ENCODE measurements at regions of chr13 and their contacts with region 1.

Region 1: DNA sequence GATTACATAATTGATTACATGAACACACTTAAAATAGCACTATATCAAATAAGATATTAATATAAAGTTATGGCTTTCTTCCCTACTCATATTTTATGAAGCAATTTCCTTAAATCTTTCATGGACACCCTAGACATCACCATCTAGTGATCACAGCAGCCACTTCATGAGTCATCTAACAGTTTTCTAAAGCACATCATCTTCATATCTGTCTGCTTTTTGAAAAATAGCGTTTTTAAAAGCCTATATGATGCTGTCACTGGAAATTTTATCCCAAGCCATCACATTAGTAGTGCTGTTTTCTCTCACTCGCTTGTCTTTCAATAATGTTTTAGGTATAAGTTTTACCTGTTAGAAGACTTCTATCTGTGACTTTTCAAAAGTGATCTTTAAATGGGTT is 326.1 kb downstream of the SLITRK6 start:
- DNase-seq: no peak
- ATAC-seq: no peak
- H3K4me3 ChIP-seq: no peak overlapping the region
- H3K27ac ChIP-seq: no peak overlapping the region
- H3K4me1 ChIP-seq: no peaks in the 10 kb centered on the region
- H3K27me3 ChIP-seq: no peaks in the 10 kb centered on the region
- CTCF ChIP-seq: no peak

Region 2: DNA sequence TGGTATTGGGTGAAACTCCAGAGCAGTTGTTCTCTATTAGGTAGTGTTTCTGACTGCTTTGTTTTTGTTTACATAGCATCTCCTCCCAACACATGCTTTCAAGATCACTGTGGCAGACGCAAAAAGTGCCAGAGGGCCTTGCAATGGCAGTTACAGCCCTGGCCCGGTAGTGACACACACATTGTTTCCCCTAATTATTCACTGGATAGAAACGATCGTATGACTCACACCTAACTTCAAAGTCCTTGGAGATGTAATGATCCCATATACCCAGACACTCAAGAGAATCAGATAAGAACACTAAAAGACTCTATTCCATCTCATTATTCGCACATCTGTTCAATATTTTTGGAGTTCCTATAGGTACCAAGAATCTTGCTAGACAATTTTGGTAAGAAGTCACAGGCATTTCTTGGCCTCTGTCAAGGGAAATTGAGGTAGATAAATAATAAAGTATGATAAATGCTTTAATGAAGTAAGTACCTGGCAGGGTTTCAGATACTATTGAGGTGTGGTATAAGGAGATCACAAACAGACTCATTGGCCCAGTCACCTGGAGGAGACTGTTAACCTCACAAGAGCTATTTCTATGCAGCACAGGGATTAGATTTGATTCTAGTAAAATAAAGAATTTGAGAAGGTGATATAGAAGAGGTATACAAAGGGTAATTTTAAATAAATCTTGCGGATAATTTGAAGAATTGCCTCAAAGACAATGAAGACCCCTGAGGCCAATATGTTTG is 159.2 kb before region 1 on chr13:
- intact Hi-C with region 1: no loop called
- DNase-seq: no peak
- ATAC-seq: no peak
- H3K4me3 ChIP-seq: no peak overlapping the region
- H3K27ac ChIP-seq: no peak overlapping the region
- H3K4me1 ChIP-seq: no peaks in the 10 kb centered on the region
- H3K27me3 ChIP-seq: no peaks in the 10 kb centered on the region
- CTCF ChIP-seq: no peak

Region 3: DNA sequence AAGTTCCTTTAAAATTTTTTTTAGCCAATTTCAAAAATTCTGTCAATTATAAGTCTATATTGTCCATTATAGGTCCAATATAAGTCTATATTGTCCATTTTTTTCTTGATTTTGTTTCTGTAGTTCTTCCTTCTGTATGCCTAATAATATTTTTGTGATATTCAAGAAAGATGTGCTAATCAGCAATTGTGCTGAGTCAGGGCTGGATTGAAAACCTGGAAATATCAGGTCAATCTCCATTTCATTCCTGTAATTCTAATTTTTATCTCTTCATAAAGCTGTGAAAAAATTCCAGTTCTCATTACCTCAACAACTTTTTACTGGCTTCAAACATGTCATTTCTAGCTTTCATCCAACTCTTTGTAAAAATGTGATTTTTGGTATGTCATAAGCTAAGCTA is 27.6 kb before region 1 on chr13:
- intact Hi-C with region 1: loop called in 1 of 10 experiments (anchors 2 kb)
- DNase-seq: no peak
- ATAC-seq: no peak
- H3K4me3 ChIP-seq: no peak overlapping the region
- H3K27ac ChIP-seq: no peak overlapping the region
- H3K4me1 ChIP-seq: no peaks in the 10 kb centered on the region
- H3K27me3 ChIP-seq: no peaks in the 10 kb centered on the region
- CTCF ChIP-seq: no peak

Region 4: DNA sequence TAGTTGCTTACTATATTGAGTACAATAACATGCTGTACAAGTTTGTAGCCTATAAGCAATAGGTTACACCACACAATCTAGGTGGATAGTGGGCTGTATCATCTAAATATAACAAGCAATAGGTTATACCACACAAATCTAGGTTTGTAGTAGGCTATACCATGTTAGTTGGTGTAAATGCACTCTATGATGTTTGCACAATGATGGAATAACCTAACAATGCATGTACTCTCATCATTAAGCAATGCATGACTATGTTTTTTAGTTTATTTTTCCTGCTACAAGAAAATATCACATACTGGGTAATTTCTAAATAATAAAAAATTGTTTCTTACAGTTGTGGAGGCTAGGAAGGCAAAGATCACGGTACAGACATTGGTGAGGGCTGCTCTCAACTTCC is 63.6 kb after region 1 on chr13:
- intact Hi-C with region 1: no loop called
- DNase-seq: no peak
- ATAC-seq: no peak
- H3K4me3 ChIP-seq: no peak overlapping the region
- H3K27ac ChIP-seq: no peak overlapping the region
- H3K4me1 ChIP-seq: no peaks in the 10 kb centered on the region
- H3K27me3 ChIP-seq: no peaks in the 10 kb centered on the region
- CTCF ChIP-seq: no peak

Measured in heart right ventricle (tissue), 16 donors.